Ovary (tissue), 10 donors: ENCODE measurements at regions of chr19 and their contacts with region 1.

Region 1: DNA sequence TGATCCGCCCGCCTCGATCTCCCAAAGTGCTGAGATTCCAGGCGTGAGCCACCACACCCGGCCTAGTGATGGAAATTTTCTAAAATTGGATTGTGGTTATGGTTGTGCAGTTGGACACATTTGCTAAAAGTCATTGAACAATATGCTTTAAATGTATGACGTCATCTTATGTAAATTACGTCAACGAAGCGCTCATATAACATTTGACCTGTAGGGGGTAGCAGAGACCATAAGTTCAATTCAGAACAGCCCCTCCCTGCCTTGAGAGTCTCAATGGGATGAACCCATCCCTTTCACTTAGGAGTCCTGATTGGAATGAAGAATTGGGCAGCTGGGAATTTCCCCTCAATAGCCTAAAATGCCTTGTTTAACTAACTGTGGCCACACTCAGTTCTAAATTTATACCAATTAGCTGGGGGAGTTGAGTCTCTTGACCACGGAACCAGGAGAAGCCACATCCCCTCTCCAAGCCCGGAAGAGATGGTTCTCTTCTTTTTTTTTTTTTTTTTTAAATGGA is 15.3 kb upstream of the TLE6 start:
- DNase-seq: peak in 2 of 5 donors; percentile 50 to 69
- H3K4me3 ChIP-seq: no peak overlapping the region
- H3K27ac ChIP-seq: no peak overlapping the region
- H3K4me1 ChIP-seq: no peaks in the 10 kb centered on the region
- H3K27me3 ChIP-seq: no peaks in the 10 kb centered on the region
- CTCF ChIP-seq: peak; percentile 44 to 95 (median 95)
- EP300 ChIP-seq: no peak
- POLR2A ChIP-seq: no peak

Region 2: DNA sequence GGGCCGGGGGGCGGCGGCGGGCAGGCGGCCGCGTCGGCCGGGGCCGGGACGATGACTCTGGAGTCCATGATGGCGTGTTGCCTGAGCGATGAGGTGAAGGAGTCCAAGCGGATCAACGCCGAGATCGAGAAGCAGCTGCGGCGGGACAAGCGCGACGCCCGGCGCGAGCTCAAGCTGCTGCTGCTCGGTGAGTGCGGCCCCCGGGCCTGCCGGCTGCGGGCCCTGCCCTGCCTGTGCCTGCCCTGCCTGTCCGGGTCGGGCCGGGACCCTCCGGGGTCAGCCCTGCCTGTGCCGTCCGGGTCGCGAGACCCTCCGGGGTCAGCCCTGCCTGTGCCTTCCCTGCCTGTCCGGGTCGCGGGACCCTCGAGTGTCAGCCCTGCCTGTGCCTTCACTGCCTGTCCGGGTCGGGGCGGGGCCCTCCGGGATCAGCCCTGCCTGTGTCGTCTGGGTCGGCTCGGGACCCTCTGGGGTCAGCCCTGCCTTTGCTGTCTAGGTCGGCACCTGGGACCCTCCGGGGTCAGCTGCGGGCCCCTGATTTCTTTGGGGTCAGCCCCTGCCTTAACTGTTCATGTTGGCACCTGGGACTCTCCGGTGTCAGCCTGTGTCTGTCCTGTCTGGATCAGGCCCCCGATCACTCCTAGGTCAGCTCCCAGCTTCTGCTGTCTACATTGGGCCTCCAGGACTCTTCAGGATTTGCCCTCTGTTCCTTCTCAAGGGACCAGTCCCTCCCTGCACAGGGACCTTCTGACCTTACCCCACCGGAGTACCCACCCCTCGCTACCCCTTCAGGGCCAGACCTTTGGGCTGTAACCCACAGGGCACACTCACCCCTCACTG is 132.7 kb after region 1 on chr19:
- intact Hi-C with region 1: loop called in 2 of 4 experiments (anchors 10 kb)
- DNase-seq: peak in 3 of 5 donors; percentile 48 to 60 (median 54)
- H3K4me3 ChIP-seq: peak overlapping the region; percentile 83
- H3K27ac ChIP-seq: no peak overlapping the region
- H3K4me1 ChIP-seq: peaks cover 39% of the 10 kb centered on the region
- H3K27me3 ChIP-seq: no peaks in the 10 kb centered on the region
- CTCF ChIP-seq: no peak
- EP300 ChIP-seq: no peak
- POLR2A ChIP-seq: no peak

Region 3: GRCh38 chr19:3163230-3163886 is 201.3 kb after region 1 on chr19:
- intact Hi-C with region 1: loop called (anchors 5 to 10 kb)
- DNase-seq: peak; percentile 62 to 77 (median 74)
- H3K4me3 ChIP-seq: no peak overlapping the region
- H3K27ac ChIP-seq: no peak overlapping the region
- H3K4me1 ChIP-seq: peaks cover 2% of the 10 kb centered on the region
- H3K27me3 ChIP-seq: no peaks in the 10 kb centered on the region
- CTCF ChIP-seq: peak; percentile 81 to 90 (median 89)
- EP300 ChIP-seq: no peak
- POLR2A ChIP-seq: no peak

Region 4: DNA sequence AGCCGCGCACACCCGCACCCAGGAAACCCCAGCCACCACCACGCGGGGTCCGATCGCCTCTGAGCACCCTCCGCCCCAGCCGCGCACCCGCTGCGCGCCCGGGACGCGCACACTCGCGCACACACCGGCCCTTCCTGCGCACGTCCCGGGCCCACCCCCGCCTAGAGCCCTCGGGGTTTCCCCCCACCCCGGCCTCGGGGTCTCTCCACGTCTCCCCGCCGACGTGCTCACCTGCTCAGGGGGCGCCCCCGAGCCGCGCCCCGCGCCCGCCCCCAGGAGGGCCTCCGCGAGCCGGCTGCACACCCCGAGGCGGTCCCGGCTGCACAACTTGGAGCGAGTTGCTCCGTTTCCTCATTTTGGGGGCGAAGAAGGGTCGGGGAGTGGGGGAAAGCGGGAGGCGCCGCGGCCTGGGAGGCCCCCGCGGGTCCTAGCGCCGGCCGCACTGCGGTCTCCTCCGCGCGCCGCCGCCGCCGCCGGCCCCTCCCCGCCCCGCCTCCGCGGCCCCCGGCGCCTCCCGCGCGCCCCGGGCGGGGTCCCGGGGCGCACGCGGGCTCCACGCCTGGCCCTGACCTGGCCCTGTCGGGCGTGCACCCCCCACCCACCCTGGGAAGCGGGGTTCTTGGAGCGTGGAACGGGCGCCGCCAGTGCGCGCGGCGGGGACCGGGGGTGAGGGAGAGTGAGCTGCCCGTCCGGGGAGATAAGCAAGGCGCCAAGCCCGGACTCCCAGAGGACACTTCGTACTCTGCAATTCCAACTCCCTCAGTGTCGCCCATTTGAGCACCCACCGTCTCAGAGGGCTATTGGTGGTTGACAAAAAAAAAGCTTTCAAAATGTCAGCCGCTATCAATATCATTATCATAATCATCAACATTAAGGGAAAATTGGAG is 824.1 kb after region 1 on chr19 and contains the start of gene MATK:
- intact Hi-C with region 1: no loop called
- DNase-seq: no peak
- H3K4me3 ChIP-seq: no peak within 1 kb of the TSS
- H3K27ac ChIP-seq: no peak within 1 kb of the TSS
- H3K4me1 ChIP-seq: no peaks in the 10 kb centered on the region
- H3K27me3 ChIP-seq: no peaks in the 10 kb centered on the region
- CTCF ChIP-seq: no peak
- EP300 ChIP-seq: no peak
- POLR2A ChIP-seq: no peak
- total RNA-seq, gene MATK: 0.40 to 1.4 (median 0.98) TPM